ENCODE measurements at regions of chr19 and their contacts with region 1.

Region 1: DNA sequence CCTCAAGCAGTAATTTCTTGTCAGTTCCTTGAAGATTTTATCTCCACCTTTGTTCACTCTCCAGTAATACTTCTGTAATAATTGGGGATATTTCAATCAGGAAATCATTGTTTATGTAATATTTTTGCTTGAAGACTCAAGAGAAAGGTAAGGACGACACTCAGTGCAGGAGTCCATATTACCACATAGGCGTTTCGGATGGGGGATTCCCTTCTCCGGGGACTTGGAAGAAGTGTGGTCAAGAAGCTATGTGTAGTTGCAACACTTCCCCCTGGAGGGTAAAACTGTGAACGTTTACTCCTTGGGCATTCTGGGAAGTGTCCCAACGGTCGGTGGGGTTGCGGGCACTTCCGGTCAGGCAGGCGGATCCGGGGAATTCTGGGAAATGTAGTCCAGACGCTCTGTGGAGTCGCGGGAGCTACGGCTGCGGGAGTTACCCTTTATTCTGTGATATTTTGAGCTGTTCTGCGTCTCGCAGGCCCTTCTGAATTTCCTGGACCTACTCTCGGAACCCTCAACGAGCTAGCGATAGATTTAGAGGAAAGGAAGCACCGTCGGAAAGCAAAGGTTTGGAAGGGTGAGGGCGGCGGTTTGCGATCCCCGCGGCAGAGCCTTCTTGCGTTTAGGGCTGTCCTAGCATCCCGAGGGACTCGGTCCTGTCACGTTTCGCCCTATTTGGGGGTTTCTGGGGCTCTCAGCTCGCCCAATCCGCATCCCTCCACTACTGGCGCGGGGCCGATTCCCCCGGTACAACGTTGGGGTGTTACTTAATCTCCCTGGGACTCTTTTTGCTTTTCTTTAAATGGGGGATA is at the start of gene ZNF221:
- DNase-seq: peak; percentile 98
- H3K4me3 ChIP-seq: peak within 1 kb of the TSS; percentile 49 to 73 (median 55)
- H3K27ac ChIP-seq: peak within 1 kb of the TSS; percentile 4
- H3K4me1 ChIP-seq: no peaks in the 10 kb centered on the region
- H3K27me3 ChIP-seq: no peaks in the 10 kb centered on the region
- CTCF ChIP-seq: peak; percentile 41 to 60
- POLR2A ChIP-seq: no peak
- total RNA-seq, gene ZNF221: 4.2 and 6.0 TPM in 2 replicates

Region 2: DNA sequence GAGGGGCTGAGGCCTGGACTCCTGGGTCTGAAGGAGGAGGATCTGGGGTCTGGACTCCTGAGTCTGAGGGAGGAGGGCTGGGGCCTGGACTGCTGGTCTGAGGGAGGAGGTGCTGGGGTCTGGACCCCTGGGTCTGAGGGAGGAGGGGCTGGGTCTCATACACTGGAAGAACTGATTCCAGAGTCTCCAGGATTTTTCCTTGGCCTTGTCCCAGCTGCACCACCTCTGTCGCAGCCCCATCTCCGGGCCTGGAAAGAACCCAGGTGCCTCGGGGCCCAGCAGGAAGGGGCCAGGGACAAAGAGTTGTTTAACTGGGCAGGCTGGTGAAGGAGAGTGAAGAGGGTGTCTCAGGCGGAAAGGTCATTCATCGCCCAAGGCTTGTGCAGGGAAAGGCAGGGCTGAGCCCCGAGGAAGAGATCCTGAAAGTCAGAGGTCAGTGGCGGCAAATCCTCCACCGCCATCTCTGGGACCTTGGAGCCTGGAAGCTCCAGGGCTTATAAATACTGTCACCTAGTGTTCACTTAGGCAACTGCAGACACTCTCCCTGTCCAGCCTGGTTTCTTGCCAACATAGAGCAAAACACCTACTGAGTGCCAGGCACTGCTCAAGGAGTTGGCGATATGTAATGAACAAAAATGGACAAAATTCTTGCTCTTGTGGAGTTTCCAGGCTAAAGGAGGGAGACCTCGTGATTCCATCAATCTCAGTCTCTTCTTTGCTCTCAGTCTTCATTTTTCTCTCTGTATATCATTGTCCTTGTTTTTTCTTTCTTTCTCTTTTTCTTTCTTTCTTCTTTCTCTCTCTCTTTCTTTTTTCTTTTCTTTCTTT is 165.8 kb before region 1 on chr19:
- CTCF ChIA-PET with region 1: no interaction called
- POLR2A ChIA-PET with region 1: no interaction called
- dilution Hi-C with region 1: no loop called
- intact Hi-C with region 1: no loop called
- DNase-seq: peak; percentile 73
- H3K4me3 ChIP-seq: no peak overlapping the region
- H3K27ac ChIP-seq: no peak overlapping the region
- H3K4me1 ChIP-seq: peaks cover 10% of the 10 kb centered on the region
- H3K27me3 ChIP-seq: no peaks in the 10 kb centered on the region
- CTCF ChIP-seq: peak; percentile 97 to 98
- POLR2A ChIP-seq: no peak

Region 3: GRCh38 chr19:43901395-43902390 is 49.3 kb before region 1 on chr19:
- CTCF ChIA-PET with region 1: interaction called, 11 read pairs
- POLR2A ChIA-PET with region 1: no interaction called
- dilution Hi-C with region 1: no loop called
- intact Hi-C with region 1: loop called (anchors 1 kb)
- DNase-seq: peak; percentile 88
- H3K4me3 ChIP-seq: peak overlapping the region; percentile 25 to 62 (median 58)
- H3K27ac ChIP-seq: no peak overlapping the region
- H3K4me1 ChIP-seq: peaks cover 8% of the 10 kb centered on the region
- H3K27me3 ChIP-seq: no peaks in the 10 kb centered on the region
- CTCF ChIP-seq: no peak
- POLR2A ChIP-seq: no peak

Region 4: DNA sequence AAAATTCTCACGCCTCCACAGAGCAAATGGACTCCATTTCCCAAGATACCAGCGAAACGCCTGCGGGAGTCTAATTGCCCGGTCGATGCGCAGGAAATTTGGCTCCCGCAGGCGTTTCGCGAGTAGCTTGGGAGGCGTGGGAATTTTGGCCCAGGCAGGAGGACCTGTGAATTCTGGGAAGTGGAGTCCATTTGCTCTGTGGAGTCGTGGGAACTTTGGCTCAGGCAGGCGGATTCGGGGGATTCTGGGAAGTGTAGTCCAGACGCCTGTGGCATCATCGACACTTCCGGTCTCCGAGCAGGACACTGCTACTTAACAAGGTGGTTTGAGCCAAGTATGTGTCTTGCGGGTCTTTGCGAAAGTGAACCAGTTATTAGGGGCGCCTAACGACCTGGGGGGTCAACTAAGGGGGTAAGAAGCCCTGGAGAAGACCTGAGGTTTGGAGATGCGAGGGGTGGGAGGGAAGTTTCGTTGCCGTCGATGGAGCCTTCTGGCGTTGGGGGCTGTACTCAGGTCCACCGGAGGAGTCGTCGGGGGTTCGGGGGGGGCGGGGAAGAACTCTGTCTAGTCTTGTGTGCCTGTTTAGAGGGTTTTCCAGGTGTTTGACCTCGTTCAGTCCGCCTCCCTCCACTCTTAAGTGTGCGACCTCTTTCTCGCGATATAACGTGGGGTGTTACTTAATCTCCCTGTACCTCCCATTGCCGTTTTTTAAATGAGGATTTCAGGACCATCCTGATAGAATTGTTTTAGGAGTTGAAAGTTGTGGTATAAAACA is 33.1 kb after region 1 on chr19 and contains the start of gene ZNF155:
- CTCF ChIA-PET with region 1: interaction called, 4 read pairs
- POLR2A ChIA-PET with region 1: no interaction called
- dilution Hi-C with region 1: no loop called
- intact Hi-C with region 1: loop called (anchors 1 kb)
- DNase-seq: peak; percentile 95
- H3K4me3 ChIP-seq: peak within 1 kb of the TSS; percentile 32 to 75 (median 68)
- H3K27ac ChIP-seq: peak within 1 kb of the TSS; percentile 23
- H3K4me1 ChIP-seq: peaks cover 6% of the 10 kb centered on the region
- H3K27me3 ChIP-seq: no peaks in the 10 kb centered on the region
- CTCF ChIP-seq: no peak
- POLR2A ChIP-seq: peak; percentile 39
- total RNA-seq, gene ZNF155: 5.9 and 7.6 TPM in 2 replicates

Region 5: DNA sequence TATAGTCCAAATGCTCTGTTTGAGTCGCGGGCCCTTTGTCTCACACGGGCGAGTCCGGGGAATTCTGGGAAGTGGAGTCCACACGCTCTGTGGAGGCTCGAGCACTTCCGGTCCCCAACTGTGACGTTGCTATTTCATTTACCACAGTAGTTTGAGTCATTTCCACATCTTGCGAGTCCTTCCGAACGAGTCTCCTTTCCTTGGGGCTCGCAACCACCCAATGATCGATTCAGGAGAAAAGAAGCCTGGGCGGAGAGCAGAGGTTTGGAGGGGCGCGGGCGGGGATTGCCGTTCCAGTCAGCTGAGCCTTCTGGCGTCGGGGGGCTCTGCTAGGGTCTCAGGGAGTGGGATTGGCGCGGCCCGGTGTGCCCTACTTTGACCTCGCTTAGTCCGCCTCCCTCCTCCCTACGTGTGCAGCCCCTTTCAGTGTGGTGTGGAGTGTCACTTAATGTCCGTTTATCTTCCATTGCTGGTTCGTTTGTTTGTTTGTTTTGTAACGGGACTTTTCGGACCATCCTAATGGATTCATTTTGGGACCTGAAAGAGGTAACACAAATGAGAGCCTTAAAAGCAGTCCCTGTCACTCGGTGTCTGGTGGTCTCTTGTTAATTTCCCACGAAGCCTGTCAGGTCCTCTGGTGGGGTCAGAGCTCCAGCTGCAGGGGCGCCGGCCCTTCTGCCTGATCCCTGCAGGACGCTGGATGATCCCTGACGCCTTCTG is 74.3 kb after region 1 on chr19 and contains the start of gene ZNF222:
- CTCF ChIA-PET with region 1: no interaction called
- POLR2A ChIA-PET with region 1: no interaction called
- dilution Hi-C with region 1: no loop called
- intact Hi-C with region 1: loop called (anchors 2 kb)
- DNase-seq: peak; percentile 88
- H3K4me3 ChIP-seq: peak within 1 kb of the TSS; percentile 76 to 91 (median 88)
- H3K27ac ChIP-seq: peak within 1 kb of the TSS; percentile 70
- H3K4me1 ChIP-seq: no peaks in the 10 kb centered on the region
- H3K27me3 ChIP-seq: peaks cover 2 to 3% of the 10 kb centered on the region in 2 experiments
- CTCF ChIP-seq: no peak
- POLR2A ChIP-seq: peak; percentile 61
- total RNA-seq, gene ZNF222: 4.7 and 5.2 TPM in 2 replicates

Region 6: DNA sequence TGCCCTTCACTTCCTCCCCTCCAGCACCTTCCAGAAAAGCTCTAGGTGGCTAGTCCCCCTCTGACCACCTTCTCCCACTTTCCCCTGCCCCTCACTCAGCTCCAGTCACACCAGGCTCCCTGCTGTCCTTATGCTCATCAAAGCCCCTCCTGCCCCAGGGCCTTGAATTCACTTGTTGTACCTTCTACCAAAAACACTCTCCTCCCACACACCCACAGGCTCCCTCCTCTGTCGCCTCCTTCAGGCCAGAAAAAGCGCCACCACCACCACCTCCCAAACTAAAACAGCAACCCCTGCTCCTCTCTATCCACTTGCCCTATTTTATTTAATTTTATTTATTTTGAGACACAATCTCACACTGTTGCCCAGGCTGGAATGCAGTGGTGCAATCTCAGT is 743.1 kb after region 1 on chr19:
- CTCF ChIA-PET with region 1: no interaction called
- POLR2A ChIA-PET with region 1: no interaction called
- dilution Hi-C with region 1: no loop called
- intact Hi-C with region 1: no loop called
- DNase-seq: no peak
- H3K4me3 ChIP-seq: no peak overlapping the region
- H3K27ac ChIP-seq: no peak overlapping the region
- H3K4me1 ChIP-seq: peaks cover 23% of the 10 kb centered on the region
- H3K27me3 ChIP-seq: no peaks in the 10 kb centered on the region
- CTCF ChIP-seq: peak in 1 of 2 donors; percentile 20
- POLR2A ChIP-seq: no peak